BJ (cell line): ENCODE measurements at regions of chr1 and their contacts with region 1.

Region 1: DNA sequence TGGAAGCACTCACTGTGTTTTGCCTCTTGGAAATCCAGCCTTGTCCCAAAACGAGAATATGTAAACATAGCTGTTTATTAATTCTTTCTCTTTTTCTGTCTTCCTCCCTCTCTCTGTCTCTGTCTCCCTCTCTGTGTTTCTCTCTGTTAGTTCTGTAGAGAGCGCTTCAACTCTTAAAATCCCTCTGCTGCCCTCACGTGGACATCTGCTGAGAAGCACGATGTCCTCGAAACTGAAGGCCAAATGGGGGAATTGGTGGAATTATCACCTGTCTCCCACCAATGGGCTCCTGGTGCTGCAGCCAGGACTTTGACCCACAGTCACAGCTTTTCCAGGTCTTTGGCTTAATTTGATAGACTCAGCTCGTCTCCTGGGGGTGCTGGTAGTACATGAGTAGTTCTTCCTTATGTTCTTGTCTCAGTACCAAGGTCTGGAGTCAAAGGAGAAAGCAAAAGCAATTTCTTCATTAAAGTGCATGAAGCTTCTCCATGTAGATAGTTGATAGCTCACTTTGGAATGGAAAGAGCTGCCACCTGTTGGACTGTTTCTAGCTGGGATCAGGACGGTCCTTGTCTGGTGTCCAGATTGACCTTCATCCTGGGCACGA is 5.5 kb upstream of the GBP6 start:
- DNase-seq: peak; percentile 5
- H3K4me3 ChIP-seq: no peak overlapping the region
- H3K27me3 ChIP-seq: no peaks in the 10 kb centered on the region
- CTCF ChIP-seq: peak; percentile 81

Region 2: DNA sequence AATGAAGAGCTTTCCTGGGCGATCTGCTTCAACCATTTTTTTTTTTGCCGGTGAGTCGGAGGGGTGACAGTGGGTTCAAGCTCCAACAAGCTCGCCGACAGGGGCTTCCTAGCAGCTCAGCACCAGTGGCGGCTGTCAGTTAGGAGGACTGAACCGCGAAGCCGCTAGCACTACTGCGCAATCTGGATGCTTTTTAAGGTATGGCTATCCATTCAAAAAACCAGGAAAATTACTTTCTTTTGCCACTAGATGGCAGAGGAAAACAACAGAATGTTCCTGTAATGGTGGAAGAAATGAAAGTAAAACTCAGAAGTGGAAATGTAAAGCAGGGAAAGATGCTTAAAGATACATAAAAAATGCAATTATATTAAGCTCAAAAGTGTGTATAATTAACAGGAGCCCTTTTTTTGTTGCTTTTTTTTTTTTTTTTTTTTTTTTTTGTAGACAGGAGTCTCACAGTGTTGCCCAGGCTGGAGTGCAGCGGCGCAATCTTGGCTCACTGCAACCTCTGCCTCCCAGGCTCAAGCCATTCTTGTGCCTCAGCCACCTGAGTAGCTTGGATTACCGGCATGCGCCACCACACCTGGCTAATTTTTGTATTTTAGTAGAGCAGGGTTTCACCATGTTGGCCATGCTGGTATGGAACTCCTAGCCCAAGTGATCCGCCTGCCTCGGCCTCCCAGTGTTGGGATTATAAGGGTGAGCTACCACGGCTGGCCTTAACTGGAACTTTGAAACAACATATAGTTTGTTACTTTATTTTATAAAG is 374.4 kb before region 1 on chr1:
- CTCF ChIA-PET with region 1: interaction called, 12 read pairs
- POLR2A ChIA-PET with region 1: no interaction called
- DNase-seq: no peak
- H3K4me3 ChIP-seq: no peak overlapping the region
- H3K27me3 ChIP-seq: no peaks in the 10 kb centered on the region
- CTCF ChIP-seq: peak; percentile 66

Region 3: DNA sequence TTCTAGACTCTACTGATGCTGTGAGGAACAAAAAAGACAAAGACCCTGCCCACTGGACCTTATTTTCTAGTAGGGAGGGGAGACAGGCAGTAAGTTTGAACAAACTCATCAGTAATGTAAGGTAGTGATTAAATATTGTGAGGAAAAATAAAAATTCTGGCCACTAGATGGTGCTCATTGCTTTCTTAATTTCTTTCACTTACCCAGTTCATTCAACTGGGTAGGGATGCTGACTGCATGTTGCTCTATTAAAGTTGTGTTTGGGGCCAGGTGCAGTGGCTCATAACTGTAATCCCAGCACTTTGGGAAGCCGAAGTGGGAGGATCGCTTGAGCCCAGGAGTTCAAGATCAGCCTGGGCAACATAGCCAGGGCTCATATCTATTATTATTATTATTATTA is 359.7 kb before region 1 on chr1:
- CTCF ChIA-PET with region 1: interaction called, 26 read pairs
- POLR2A ChIA-PET with region 1: no interaction called
- DNase-seq: no peak
- H3K4me3 ChIP-seq: no peak overlapping the region
- H3K27me3 ChIP-seq: no peaks in the 10 kb centered on the region
- CTCF ChIP-seq: peak; percentile 33

Region 4: DNA sequence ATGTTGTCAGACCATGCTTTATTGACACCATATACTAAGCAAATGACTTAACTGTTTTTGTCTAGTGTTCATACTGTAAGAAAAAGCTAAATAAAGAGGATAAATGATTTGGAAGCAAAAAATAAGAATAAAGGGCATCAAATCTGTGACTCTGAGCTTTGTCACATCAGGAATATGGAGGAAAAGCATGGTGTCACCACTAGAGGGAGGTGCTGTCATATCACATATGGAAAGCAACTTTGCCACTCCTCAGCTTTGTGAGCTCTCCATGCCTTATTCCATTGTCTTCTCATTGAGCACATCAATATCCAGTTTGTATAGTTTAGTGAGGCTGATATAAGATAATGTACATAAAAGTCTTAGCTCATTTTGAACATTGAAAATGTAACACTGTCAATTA is 272.6 kb before region 1 on chr1:
- CTCF ChIA-PET with region 1: interaction called, 13 read pairs
- POLR2A ChIA-PET with region 1: no interaction called
- DNase-seq: no peak
- H3K4me3 ChIP-seq: no peak overlapping the region
- H3K27me3 ChIP-seq: no peaks in the 10 kb centered on the region
- CTCF ChIP-seq: peak; percentile 63

Region 5: DNA sequence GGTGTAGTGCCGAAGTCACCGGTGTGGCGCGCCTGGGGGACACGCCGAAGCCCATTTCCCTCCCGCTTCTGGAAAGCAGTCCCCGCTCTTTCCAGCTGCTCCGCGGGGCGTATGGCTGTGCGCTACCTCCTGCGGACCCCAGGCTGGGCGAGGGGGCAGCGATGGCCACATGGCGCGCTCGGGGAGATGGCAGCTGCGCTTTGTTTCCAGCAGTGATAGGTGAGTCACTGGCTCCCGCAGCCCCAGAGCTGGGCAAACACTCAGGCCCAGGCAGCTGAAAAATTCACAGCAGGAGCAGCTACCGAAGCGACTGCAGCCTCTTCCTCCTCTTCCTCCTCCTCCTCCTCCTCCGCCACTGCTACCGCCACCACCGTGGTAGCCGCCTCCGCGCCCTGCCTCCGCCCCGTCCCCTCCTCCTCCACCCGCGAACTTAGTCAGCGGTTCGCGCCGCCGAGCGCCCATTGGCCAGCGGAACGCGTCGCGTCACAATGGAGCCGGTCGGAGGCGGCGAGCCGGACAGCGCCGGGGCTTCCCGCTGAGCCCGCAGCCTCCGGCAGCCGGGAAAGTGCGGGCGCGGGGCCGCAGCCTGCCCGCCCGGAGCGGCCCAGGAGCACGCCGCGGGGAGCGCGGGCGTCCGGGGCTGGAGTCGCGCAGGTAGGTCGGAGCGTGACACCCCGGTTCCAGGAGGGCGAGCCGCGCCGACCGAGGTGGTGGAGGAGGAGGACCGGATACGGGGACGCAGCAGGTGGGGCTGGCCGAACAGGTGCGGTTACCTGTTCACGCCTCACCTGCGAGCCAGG is 166.2 kb after region 1 on chr1 and contains the start of gene LRRC8B:
- CTCF ChIA-PET with region 1: no interaction called
- POLR2A ChIA-PET with region 1: no interaction called
- DNase-seq: peak; percentile 5
- H3K4me3 ChIP-seq: peak within 1 kb of the TSS; percentile 69
- H3K27me3 ChIP-seq: peaks cover 4% of the 10 kb centered on the region
- CTCF ChIP-seq: no peak
- polyA plus RNA-seq, gene LRRC8B: 0.20 and 0.22 TPM in 2 replicates